ENCODE measurements at regions of chr2 and their contacts with region 1.

Region 1: DNA sequence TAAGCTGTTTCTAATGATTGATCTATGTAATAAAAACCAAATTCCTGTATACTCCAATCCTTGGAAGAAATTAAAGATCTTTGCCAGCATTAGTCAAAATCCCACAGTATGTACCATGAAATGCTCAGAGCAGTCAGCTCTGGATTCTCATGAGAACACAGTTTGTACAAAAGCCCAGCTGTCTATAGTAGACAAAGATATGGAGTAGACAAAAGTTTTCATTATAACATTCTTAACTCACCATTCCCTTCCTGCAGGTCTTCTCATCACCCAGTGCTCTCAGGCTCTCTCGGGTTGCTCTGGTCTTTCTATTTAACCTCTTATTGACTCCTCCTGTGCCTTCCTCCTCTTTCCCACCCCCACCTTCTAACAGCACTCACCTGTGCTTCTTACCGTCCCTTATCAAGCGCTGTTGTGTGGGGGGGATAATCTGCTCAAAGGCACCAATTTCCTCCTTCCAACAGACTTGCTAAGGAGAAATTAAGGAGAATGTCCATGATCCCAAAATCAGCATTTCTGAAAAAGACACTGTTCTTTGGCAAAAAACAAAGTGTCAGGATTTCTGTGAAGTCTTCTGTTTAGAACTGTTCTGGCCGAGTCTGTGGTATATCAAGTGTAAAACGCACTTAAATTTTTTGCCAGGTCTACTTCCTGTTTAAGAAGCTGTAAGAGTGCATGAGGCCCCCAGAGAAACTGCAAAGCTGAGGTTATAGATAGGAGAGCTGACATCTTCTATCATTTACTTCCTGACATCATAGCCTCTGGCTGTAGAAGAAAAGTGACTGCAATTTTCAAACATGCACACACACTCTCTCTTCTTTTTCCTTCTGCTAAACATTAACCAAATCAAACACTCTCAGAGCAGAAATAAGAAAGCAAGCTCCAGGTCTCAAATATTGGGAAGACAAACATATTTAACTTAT is 144.1 kb downstream of the EVA1A start:
- DNase-seq: no peak
- ATAC-seq: no peak
- H3K4me3 ChIP-seq: no peak overlapping the region
- H3K27ac ChIP-seq: no peak overlapping the region
- H3K4me1 ChIP-seq: no peaks in the 10 kb centered on the region
- H3K27me3 ChIP-seq: peaks cover 40% of the 10 kb centered on the region
- CTCF ChIP-seq: no peak
- POLR2A ChIP-seq: no peak
- RAD21 ChIP-seq: no peak

Region 2: DNA sequence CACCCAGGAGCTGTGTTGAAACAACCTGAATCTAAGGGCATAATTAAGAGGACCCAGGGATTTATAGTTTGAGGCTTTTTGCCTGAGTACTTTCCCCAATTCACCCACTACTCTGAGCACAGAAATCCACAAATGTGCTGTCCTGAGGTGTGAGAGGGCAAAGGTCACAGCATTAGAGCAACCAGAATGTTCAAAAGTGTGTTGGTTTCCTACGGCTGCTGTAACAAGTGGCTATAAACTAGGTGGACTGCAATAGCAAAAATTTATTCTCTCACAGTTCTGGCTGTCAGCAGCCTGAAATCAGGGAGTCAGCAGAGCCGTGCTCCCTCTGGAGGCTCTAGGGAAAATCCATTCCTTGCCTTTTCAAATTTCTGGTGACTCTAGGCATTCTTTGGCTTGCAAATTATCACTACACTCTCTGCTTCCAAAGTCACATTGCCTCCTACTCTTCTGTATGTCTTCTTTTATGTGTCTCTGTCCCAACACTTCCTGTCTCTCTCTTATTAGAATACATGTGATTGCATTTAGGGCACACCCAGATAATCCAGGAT is 126.0 kb before region 1 on chr2:
- CTCF ChIA-PET with region 1: no interaction called
- POLR2A ChIA-PET with region 1: interaction called, 15 read pairs
- dilution Hi-C with region 1: no loop called
- in situ Hi-C with region 1: no loop called
- intact Hi-C with region 1: no loop called
- DNase-seq: peak; percentile 45
- ATAC-seq: peak; percentile 79
- H3K4me3 ChIP-seq: no peak overlapping the region
- H3K27ac ChIP-seq: no peak overlapping the region
- H3K4me1 ChIP-seq: peaks cover 8% of the 10 kb centered on the region; the same call in 1 of the 2 replicates
- H3K27me3 ChIP-seq: no peaks in the 10 kb centered on the region
- CTCF ChIP-seq: peak; percentile 51
- POLR2A ChIP-seq: no peak
- RAD21 ChIP-seq: peak; percentile 54

Region 3: DNA sequence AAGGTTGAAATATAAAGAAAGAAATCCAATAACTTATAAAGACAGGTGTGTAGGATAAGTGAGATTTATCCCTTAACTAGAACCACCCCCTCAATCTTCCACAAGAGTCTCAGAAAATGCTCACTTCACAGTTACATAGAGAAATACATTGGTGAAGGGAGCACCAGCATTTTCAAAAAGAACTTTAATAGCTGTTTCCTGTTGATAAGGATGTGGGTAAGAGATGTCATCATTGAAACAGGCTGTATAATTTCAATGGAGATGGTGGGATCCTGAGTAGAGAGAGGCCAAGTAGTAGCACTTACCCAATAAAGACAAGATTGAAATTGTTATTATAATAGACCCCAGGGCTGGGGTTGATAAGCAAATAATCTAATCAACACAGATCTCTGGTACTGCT is 55.2 kb before region 1 on chr2:
- CTCF ChIA-PET with region 1: no interaction called
- POLR2A ChIA-PET with region 1: no interaction called
- dilution Hi-C with region 1: no loop called
- in situ Hi-C with region 1: no loop called
- intact Hi-C with region 1: loop called (anchors 5 kb)
- DNase-seq: no peak
- ATAC-seq: no peak
- H3K4me3 ChIP-seq: no peak overlapping the region
- H3K27ac ChIP-seq: no peak overlapping the region
- H3K4me1 ChIP-seq: no peaks in the 10 kb centered on the region
- H3K27me3 ChIP-seq: no peaks in the 10 kb centered on the region; the same call in 1 of the 2 replicates
- CTCF ChIP-seq: no peak
- POLR2A ChIP-seq: no peak
- RAD21 ChIP-seq: no peak

Region 4: GRCh38 chr2:75379476-75380228 is 37.0 kb before region 1 on chr2:
- CTCF ChIA-PET with region 1: no interaction called
- POLR2A ChIA-PET with region 1: no interaction called
- dilution Hi-C with region 1: no loop called
- in situ Hi-C with region 1: no loop called
- intact Hi-C with region 1: loop called (anchors 1 kb)
- DNase-seq: no peak
- ATAC-seq: no peak
- H3K4me3 ChIP-seq: no peak overlapping the region
- H3K27ac ChIP-seq: no peak overlapping the region
- H3K4me1 ChIP-seq: no peaks in the 10 kb centered on the region
- H3K27me3 ChIP-seq: no peaks in the 10 kb centered on the region; the same call in 1 of the 2 replicates
- CTCF ChIP-seq: no peak
- POLR2A ChIP-seq: no peak
- RAD21 ChIP-seq: no peak

Measured in IMR-90 (cell line).